ENCODE measurements at regions of chr18 and their contacts with region 1.

Region 1: GRCh38 chr18:70288851-70289328 is at the start of gene SOCS6:
- DNase-seq: peak; percentile 41 to 61
- H3K4me3 ChIP-seq: peak within 1 kb of the TSS; percentile 57
- H3K4me3 Mint-ChIP-seq: peak within 1 kb of the TSS; percentile 70
- H3K27ac Mint-ChIP-seq: no peak within 1 kb of the TSS
- H3K4me1 ChIP-seq: peaks cover 5% of the 10 kb centered on the region; the same call in 1 of the 2 replicates
- H3K4me1 Mint-ChIP-seq: peaks cover 6% of the 10 kb centered on the region
- H3K27me3 ChIP-seq: no peaks in the 10 kb centered on the region
- H3K27me3 Mint-ChIP-seq: no peaks in the 10 kb centered on the region
- CTCF ChIP-seq: no peak
- total RNA-seq, gene SOCS6: 19.0 and 23.2 TPM in 2 replicates

Region 2: DNA sequence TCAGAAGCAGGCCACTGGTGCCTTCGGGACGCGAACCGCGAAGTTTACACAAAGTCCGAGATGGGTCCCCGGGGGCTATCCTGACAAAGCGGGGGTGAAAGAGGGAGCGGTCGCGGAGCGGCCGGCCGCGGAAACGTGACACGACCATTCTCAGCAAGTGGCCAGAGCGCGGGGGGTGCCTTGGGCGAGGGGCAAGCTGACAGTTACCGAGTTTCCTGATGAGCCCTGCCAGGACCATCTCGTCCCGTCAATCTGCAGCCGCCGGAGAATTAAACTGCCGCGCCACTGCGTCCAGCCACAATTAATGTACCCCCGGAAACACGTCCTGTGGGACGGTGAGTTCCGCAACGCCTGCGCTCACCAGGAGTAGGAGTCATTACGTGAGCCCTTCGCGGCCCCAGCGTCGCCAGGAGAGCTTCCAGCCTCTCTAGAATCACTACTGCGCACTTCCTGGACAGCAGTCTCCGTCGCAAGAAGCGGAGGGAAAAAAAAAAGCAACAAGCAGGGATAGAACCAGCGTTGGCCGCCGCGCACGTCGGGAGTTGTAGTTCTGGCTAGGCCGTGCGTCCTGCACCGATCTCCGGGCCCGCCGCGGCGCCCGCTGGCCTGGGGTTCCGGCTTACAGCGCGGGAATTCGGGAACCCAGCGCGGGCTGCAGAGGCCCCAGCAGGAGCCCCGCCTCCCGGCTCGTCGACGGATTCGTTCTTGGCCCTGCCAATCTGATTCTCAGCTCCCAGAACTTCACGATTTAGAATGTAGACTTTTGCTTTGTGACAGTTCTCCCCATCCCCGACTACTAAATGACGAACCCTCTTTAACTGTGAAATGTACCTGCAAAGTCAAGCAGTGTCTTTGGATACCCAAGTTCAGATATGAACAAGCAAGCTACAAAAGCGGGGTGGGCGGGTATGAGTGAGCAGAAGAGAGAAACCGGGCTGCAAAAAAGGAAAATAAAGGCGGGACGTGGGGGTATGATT is 83.2 kb before region 1 on chr18 and contains the start of gene RTTN:
- CTCF ChIA-PET with region 1: no interaction called
- POLR2A ChIA-PET with region 1: no interaction called
- intact Hi-C with region 1: loop called (anchors 5 kb)
- DNase-seq: peak; percentile 87 to 91
- H3K4me3 ChIP-seq: peak within 1 kb of the TSS; percentile 69
- H3K4me3 Mint-ChIP-seq: peak within 1 kb of the TSS; percentile 83
- H3K27ac Mint-ChIP-seq: peak within 1 kb of the TSS; percentile 95
- H3K4me1 ChIP-seq: no peaks in the 10 kb centered on the region
- H3K4me1 Mint-ChIP-seq: no peaks in the 10 kb centered on the region
- H3K27me3 ChIP-seq: no peaks in the 10 kb centered on the region
- H3K27me3 Mint-ChIP-seq: no peaks in the 10 kb centered on the region
- CTCF ChIP-seq: no peak
- total RNA-seq, gene RTTN: 12.1 and 14.6 TPM in 2 replicates

Measured in Caco-2 (cell line).